ENCODE measurements at regions of chr17 and their contacts with region 1.

Region 1: DNA sequence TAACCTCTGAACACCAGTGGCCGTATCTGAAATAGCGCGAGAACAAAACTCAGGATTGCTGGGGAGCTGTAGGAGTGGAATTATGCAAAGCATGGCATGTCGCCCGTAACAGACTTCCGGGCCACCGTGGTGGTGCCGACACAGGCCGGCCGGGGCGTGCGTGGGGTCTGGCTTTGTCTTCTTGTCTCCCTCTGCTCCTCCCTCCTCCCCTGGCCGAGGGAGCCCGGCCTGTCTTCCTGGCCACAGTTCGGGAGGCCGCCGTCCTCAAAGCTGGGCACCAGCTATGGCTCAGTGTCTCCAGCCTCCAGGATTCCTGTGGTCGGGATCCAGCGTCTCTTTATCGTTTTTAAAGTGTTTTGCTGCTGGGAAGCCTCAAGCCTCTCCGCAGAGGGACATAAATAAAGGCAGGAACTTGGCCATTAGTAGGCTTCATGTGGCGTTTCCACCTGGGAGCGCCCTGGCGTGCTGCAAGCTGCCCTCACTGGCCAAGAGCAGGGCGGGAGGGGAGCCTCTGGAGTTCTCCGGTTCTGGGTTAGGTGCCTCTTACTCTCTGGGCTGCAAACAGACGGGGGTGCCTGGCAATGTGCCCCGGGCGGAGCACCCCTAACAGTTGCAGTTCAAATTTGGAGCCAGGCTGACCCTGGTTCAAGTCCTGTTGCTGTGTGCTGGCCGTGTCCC is 22.0 kb upstream of the NPTX1 start:
- DNase-seq: peak; percentile 93
- H3K4me3 ChIP-seq: no peak overlapping the region
- CTCF ChIP-seq: no peak

Region 2: GRCh38 chr17:80544655-80545498 is 46.5 kb after region 1 on chr17 and contains the start of gene RPTOR:
- in situ Hi-C with region 1: loop called (anchors 10 kb)
- DNase-seq: peak; percentile 73
- H3K4me3 ChIP-seq: peak within 1 kb of the TSS; percentile 87
- CTCF ChIP-seq: no peak